ENCODE measurements at regions of chr12 and their contacts with region 1.

Region 1: GRCh38 chr12:3275171-3276041 is 198.2 kb downstream of the TSPAN9 start:
- DNase-seq: peak; percentile 31
- ATAC-seq: peak; percentile 86
- H3K4me3 ChIP-seq: no peak overlapping the region
- H3K27ac ChIP-seq: no peak overlapping the region
- H3K4me1 ChIP-seq: no peaks in the 10 kb centered on the region
- H3K27me3 ChIP-seq: no peaks in the 10 kb centered on the region
- CTCF ChIP-seq: peak; percentile 93
- EP300 ChIP-seq: no peak
- POLR2A ChIP-seq: no peak
- RAD21 ChIP-seq: peak; percentile 86

Region 2: DNA sequence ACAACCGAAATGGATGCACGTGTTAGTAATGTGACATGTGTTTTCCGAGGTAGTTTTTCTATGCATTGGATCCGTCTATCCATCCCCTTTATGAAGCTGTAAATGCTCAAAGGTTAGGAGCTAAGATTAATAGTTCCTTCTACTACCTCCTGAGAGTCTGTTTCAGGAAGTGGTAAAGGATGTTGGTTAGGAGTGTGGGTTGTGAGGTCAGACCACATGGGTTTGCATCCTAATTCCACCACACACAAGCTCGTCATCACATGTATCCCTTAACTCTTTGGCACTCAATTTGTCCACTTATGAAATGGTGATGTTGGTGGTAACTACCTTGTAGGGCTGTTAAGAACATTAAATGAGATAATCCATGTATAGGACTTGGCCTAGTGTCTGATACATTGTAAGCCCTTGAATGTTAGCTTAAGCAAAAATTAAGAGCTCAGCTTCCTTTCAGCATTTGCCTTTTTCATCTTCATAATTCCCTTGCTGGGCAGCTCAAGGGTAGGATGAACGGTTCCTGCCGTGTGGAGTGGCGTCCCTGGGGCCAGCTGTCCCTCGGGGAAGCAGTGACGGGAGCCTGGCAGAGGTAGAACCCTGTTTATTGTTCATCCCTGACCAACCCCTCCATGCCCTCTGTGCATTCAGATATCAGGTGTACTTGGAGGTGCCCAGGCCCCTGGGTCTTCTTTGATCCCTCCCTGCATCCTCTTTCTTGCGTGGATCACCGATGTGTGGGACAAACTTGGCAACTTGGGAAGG is 145.9 kb before region 1 on chr12:
- CTCF ChIA-PET with region 1: no interaction called
- POLR2A ChIA-PET with region 1: no interaction called
- in situ Hi-C with region 1: loop called (anchors 5 kb)
- intact Hi-C with region 1: no loop called
- DNase-seq: no peak
- ATAC-seq: no peak
- H3K4me3 ChIP-seq: no peak overlapping the region
- H3K27ac ChIP-seq: no peak overlapping the region
- H3K4me1 ChIP-seq: peaks cover 7% of the 10 kb centered on the region; the same call in 1 of the 2 replicates
- H3K27me3 ChIP-seq: no peaks in the 10 kb centered on the region
- CTCF ChIP-seq: no peak
- EP300 ChIP-seq: no peak
- POLR2A ChIP-seq: no peak
- RAD21 ChIP-seq: no peak

Region 3: GRCh38 chr12:3135522-3136461 is 139.6 kb before region 1 on chr12:
- CTCF ChIA-PET with region 1: interaction called, 28 read pairs
- POLR2A ChIA-PET with region 1: no interaction called
- in situ Hi-C with region 1: loop called (anchors 5 kb)
- intact Hi-C with region 1: loop called (anchors 1 kb)
- DNase-seq: peak; percentile 73
- ATAC-seq: peak; percentile 84
- H3K4me3 ChIP-seq: no peak overlapping the region
- H3K27ac ChIP-seq: no peak overlapping the region
- H3K4me1 ChIP-seq: peaks cover 5% of the 10 kb centered on the region; the same call in 1 of the 2 replicates
- H3K27me3 ChIP-seq: no peaks in the 10 kb centered on the region
- CTCF ChIP-seq: peak; percentile 92
- EP300 ChIP-seq: no peak
- POLR2A ChIP-seq: no peak
- RAD21 ChIP-seq: peak; percentile 93

Region 4: GRCh38 chr12:3202734-3203446 is 72.5 kb before region 1 on chr12:
- CTCF ChIA-PET with region 1: interaction called, 8 read pairs
- POLR2A ChIA-PET with region 1: no interaction called
- in situ Hi-C with region 1: no loop called
- intact Hi-C with region 1: loop called (anchors 2 kb)
- DNase-seq: peak; percentile 28
- ATAC-seq: peak; percentile 63
- H3K4me3 ChIP-seq: no peak overlapping the region
- H3K27ac ChIP-seq: no peak overlapping the region
- H3K4me1 ChIP-seq: 0 out of 2 replicates have a peak, but pooled peaks cover 8% of the 10 kb centered on the region
- H3K27me3 ChIP-seq: no peaks in the 10 kb centered on the region
- CTCF ChIP-seq: peak; percentile 92
- EP300 ChIP-seq: no peak
- POLR2A ChIP-seq: no peak
- RAD21 ChIP-seq: peak; percentile 53; the same call in 1 of the 2 replicates

Region 5: DNA sequence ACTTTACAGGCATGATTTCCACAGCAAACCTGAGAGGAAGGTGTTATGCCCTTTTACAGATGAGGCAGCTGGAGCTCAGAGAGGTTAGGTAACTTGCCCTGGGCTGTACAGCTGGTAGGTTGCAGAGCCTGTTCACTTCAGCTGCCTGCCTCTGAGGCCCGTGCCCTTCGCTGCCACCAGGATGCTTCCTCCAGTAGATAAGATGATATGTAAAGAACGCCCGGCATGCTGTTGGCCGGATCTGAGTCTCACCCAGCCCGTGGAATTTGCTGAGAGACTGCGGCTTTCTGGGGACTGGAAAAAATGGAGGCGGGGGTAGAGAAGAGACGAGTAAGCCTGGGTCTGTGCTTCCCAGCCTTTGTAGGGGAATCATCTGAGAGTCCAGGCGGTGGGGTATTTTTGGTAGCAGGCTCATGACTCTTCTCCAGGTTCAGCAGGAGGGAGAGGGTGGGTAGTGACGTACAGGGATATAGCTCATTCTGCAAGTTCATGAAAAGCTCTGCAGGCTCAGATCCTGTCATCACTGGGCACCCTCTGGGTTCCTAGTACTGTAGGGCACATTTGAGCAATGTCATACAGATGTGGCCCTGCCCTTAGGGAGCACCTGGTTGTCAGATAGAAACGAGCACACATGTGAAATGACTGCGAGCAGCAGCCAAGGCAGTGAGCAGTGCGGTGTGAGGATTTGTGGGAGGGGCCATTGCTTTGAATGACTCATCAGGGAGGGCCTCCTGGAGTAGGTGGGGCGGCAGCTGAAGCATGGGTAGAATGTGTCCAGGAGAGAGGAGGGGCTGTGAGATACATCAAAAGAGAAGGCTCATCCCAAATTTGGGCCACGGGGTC is 38.8 kb before region 1 on chr12:
- CTCF ChIA-PET with region 1: no interaction called
- POLR2A ChIA-PET with region 1: no interaction called
- in situ Hi-C with region 1: no loop called
- intact Hi-C with region 1: no loop called
- DNase-seq: peak; percentile 29
- ATAC-seq: peak; percentile 31; the same call in 2 of the 3 replicates
- H3K4me3 ChIP-seq: no peak overlapping the region
- H3K27ac ChIP-seq: no peak overlapping the region
- H3K4me1 ChIP-seq: peaks cover 18% of the 10 kb centered on the region
- H3K27me3 ChIP-seq: no peaks in the 10 kb centered on the region
- CTCF ChIP-seq: no peak
- EP300 ChIP-seq: no peak
- POLR2A ChIP-seq: no peak
- RAD21 ChIP-seq: no peak

Region 6: GRCh38 chr12:3252450-3252891 is 22.9 kb before region 1 on chr12:
- CTCF ChIA-PET with region 1: no interaction called
- POLR2A ChIA-PET with region 1: no interaction called
- in situ Hi-C with region 1: no loop called
- intact Hi-C with region 1: no loop called
- DNase-seq: no peak
- ATAC-seq: no peak
- H3K4me3 ChIP-seq: no peak overlapping the region
- H3K27ac ChIP-seq: no peak overlapping the region
- H3K4me1 ChIP-seq: no peaks in the 10 kb centered on the region
- H3K27me3 ChIP-seq: no peaks in the 10 kb centered on the region; a peak in 1 of 5 replicates
- CTCF ChIP-seq: no peak
- EP300 ChIP-seq: no peak
- POLR2A ChIP-seq: no peak
- RAD21 ChIP-seq: no peak

Measured in HepG2 (cell line).